ENCODE measurements at regions of chr2 and their contacts with region 1.

Region 1: GRCh38 chr2:231900486-231900942 is 25.7 kb downstream of the NPPC start:
- DNase-seq: peak; percentile 79
- H3K4me3 Mint-ChIP-seq: no peak overlapping the region
- H3K27ac Mint-ChIP-seq: no peak overlapping the region
- H3K4me1 Mint-ChIP-seq: no peaks in the 10 kb centered on the region
- H3K27me3 Mint-ChIP-seq: no peaks in the 10 kb centered on the region
- CTCF ChIP-seq: peak; percentile 90

Region 2: GRCh38 chr2:231854671-231855070 is 45.8 kb before region 1 on chr2:
- CTCF ChIA-PET with region 1: interaction called, 10 read pairs
- POLR2A ChIA-PET with region 1: no interaction called
- intact Hi-C with region 1: loop called (anchors 10 kb)
- DNase-seq: peak; percentile 49
- H3K4me3 Mint-ChIP-seq: no peak overlapping the region
- H3K27ac Mint-ChIP-seq: no peak overlapping the region
- H3K4me1 Mint-ChIP-seq: no peaks in the 10 kb centered on the region
- H3K27me3 Mint-ChIP-seq: peaks cover 22% of the 10 kb centered on the region
- CTCF ChIP-seq: no peak

Region 3: DNA sequence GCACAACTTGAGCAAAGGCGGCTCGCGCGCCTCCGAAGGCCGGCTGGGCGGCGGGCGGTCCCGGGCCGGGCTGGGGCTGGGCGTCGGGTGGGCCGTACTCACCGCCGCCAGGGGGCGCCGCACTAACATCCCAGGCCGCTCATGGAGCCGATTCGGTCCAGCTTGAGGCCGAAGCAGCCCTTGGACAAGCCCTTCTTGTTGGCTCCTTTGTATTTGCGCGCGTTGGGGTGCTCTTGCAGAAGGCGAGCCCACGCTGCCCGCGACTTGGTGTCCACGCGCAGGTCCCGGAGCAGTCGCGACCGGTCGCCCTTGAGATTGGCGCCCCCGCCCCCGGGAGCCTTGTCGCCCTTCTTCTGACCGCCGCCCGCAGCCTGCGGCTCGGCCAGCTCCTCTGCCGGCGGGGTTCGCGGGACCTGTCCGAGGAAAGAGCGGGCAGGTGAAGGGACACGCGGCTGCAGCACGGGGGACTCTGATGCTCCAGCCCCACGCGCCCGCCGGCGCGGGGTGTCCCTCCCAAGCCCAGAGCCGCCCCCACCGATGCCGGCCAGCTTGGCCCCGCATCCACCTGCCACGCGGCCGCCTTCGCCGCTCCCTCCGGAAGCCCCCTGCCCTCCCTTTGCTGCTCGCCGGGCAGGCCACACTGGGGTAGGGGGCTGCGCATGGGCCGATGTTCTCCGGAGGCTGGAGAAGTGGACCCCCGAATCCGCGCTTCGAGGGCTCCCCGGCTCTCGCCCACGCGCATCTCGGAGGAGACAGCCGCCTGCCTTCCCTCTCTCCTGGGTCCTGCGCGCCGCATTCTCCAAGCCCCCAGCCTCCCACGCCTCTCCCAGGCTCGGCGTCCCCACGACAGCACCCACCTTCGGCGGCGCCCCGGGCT is 25.0 kb after region 1 on chr2:
- CTCF ChIA-PET with region 1: interaction called, 10 read pairs
- POLR2A ChIA-PET with region 1: no interaction called
- intact Hi-C with region 1: no loop called
- DNase-seq: peak; percentile 85
- H3K4me3 Mint-ChIP-seq: peak overlapping the region; percentile 60
- H3K27ac Mint-ChIP-seq: no peak overlapping the region
- H3K4me1 Mint-ChIP-seq: no peaks in the 10 kb centered on the region
- H3K27me3 Mint-ChIP-seq: peaks cover 63% of the 10 kb centered on the region
- CTCF ChIP-seq: peak; percentile 91

Region 4: DNA sequence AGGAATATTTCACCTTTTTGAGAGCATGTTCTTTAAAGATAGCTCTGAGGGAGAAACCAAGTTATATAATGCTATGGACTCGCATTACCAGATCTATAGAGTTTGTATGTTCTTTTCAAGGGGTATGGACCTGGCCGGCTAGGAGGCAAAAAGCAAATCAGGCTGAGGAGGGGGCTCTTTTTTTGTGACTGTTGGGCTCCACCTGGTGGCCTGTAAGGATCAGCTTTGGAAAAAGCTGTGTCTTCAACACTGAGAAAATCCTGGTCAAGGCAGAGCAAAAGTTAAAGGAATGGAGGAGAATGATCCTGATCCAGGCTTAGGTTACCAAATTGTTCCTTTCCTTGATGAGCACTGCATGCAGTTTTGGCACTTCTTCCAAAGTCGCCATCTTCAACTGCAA is 241.5 kb after region 1 on chr2:
- CTCF ChIA-PET with region 1: interaction called, 15 read pairs
- POLR2A ChIA-PET with region 1: no interaction called
- intact Hi-C with region 1: no loop called
- DNase-seq: peak; percentile 46
- H3K4me3 Mint-ChIP-seq: no peak overlapping the region
- H3K27ac Mint-ChIP-seq: no peak overlapping the region
- H3K4me1 Mint-ChIP-seq: no peaks in the 10 kb centered on the region
- H3K27me3 Mint-ChIP-seq: no peaks in the 10 kb centered on the region
- CTCF ChIP-seq: peak; percentile 71

Region 5: GRCh38 chr2:232438951-232439757 is 538.6 kb after region 1 on chr2:
- CTCF ChIA-PET with region 1: interaction called, 29 read pairs
- POLR2A ChIA-PET with region 1: no interaction called
- intact Hi-C with region 1: no loop called
- DNase-seq: peak; percentile 43
- H3K4me3 Mint-ChIP-seq: no peak overlapping the region
- H3K27ac Mint-ChIP-seq: no peak overlapping the region
- H3K4me1 Mint-ChIP-seq: no peaks in the 10 kb centered on the region
- H3K27me3 Mint-ChIP-seq: peaks cover 10% of the 10 kb centered on the region
- CTCF ChIP-seq: peak; percentile 51

Region 6: GRCh38 chr2:232521959-232522622 is 621.6 kb after region 1 on chr2:
- CTCF ChIA-PET with region 1: no interaction called
- POLR2A ChIA-PET with region 1: no interaction called
- intact Hi-C with region 1: loop called (anchors 2 kb)
- DNase-seq: peak; percentile 38
- H3K4me3 Mint-ChIP-seq: no peak overlapping the region
- H3K27ac Mint-ChIP-seq: no peak overlapping the region
- H3K4me1 Mint-ChIP-seq: no peaks in the 10 kb centered on the region
- H3K27me3 Mint-ChIP-seq: peaks cover 11% of the 10 kb centered on the region
- CTCF ChIP-seq: peak; percentile 90